ENCODE measurements at regions of chr7 and their contacts with region 1.

Region 1: DNA sequence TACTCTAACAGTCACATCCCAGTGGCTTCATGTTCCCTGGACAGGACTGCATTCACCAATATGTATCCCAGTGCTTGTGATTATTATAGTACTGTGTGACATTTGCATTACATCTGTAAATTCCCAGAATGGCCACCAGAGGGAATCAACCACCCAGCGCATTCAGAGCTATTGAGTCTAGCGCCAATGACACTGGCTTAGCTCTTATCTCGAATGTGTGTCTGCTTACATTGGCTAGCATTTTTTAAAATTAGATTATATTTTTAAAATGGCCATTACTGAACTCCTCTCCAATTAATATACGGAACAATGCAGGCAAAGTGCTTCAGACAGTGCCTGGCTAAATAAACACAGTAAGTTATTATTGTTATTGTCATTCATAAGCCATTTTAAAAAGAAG is 36.3 kb downstream of the TRIL start:
- DNase-seq: peak; percentile 44
- H3K4me3 ChIP-seq: no peak overlapping the region
- H3K27ac ChIP-seq: no peak overlapping the region
- H3K4me1 ChIP-seq: peaks cover 4% of the 10 kb centered on the region
- H3K27me3 ChIP-seq: no peaks in the 10 kb centered on the region
- CTCF ChIP-seq: peak; percentile 82 to 90

Region 2: DNA sequence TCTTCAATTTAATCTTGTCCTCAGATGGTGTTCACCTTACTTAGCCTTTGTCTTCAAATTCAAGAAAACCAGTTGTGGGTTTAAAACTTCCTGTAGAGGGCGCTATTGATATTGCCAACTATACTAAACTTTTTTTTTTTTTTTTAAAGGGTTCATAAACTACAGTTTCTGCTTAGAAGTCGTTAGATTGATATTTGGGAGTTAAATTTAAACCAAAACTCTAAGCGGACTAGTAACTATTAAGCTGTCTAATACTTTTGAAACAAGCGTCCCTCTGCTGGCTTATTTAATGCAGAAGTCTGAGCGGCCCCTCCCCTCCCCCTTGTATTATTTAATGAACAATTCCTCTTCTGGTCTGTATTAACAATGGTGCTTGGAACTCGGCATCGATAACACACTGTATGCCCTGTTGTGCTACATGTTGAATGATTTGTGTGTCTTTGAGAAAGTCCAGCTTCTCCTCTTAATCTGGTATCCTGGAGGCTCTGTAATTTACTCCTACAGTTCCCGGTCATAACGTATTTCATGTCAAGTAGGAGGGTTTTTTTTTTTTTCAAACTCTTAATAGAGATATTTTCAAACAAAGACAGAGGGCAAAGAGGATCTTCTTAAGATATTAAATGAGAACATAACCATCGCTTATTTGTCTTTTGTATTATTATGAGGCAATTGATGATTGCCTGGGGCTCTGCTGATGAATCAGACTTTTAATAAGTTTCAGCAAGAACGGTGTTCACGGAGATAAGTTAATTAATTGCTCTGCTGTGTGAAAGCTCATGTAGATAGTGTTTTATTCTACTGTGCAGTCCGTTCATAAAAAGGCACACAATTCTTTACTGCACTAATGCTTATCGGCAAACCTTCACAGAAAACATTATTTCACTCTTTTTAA is 532.1 kb before region 1 on chr7:
- CTCF ChIA-PET with region 1: no interaction called
- dilution Hi-C with region 1: no loop called
- in situ Hi-C with region 1: no loop called
- intact Hi-C with region 1: loop called (anchors 5 kb)
- DNase-seq: peak; percentile 58
- H3K4me3 ChIP-seq: peak overlapping the region; percentile 26 to 58 (median 30)
- H3K27ac ChIP-seq: no peak overlapping the region
- H3K4me1 ChIP-seq: peaks cover 9% of the 10 kb centered on the region
- H3K27me3 ChIP-seq: no peaks in the 10 kb centered on the region
- CTCF ChIP-seq: peak; percentile 58 to 65

Region 3: DNA sequence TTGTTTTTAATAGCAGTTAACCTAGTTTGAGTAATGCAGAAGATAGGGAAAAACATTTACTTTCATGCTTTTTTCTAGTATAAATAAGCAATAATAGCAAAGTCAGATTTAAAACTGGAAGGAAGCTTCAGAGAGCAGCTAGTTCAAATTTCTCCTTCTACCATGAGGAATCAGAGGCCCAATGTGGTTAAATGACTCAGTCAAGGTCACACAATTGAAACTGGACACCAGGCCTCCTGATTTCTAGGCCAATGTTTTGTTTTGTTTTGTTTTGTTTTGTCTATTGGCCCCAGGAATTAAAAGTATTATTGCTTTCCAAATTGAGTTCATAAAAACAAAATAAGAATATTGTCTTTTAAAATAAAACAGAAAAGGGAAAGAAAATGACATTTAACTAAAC is 86.0 kb before region 1 on chr7:
- CTCF ChIA-PET with region 1: no interaction called
- dilution Hi-C with region 1: no loop called
- in situ Hi-C with region 1: no loop called
- intact Hi-C with region 1: no loop called
- DNase-seq: peak; percentile 44
- H3K4me3 ChIP-seq: no peak overlapping the region
- H3K27ac ChIP-seq: no peak overlapping the region
- H3K4me1 ChIP-seq: no peaks in the 10 kb centered on the region
- H3K27me3 ChIP-seq: no peaks in the 10 kb centered on the region
- CTCF ChIP-seq: no peak

Region 4: GRCh38 chr7:29105752-29106668 is 184.2 kb after region 1 on chr7:
- CTCF ChIA-PET with region 1: interaction called, 23 read pairs
- dilution Hi-C with region 1: loop called (anchors 5 kb)
- in situ Hi-C with region 1: loop called (anchors 5 kb)
- intact Hi-C with region 1: loop called (anchors 1 kb)
- DNase-seq: peak; percentile 54
- H3K4me3 ChIP-seq: no peak overlapping the region
- H3K27ac ChIP-seq: no peak overlapping the region
- H3K4me1 ChIP-seq: peaks cover 21% of the 10 kb centered on the region
- H3K27me3 ChIP-seq: no peaks in the 10 kb centered on the region
- CTCF ChIP-seq: peak; percentile 89 to 93

Region 5: DNA sequence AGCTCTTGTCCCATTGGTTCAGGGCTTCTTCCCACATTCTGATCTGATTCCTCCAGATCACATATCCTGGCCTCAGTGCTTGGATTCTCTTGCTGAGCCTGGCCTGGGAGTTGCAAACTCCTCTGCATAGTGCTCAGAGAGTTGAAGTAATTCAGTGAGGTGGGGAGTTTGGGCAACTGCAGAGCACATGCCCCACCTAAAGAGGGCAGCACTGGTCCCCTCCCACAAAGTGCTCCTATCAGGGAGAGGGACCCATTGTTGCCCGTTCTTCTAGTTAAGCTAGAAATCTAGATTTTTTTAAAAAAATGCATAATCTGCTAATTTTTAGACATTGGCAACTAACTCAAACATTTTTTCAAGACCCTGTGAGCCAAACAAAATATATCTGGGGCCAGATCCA is 317.8 kb after region 1 on chr7:
- CTCF ChIA-PET with region 1: no interaction called
- dilution Hi-C with region 1: no loop called
- in situ Hi-C with region 1: no loop called
- intact Hi-C with region 1: loop called (anchors 1 kb)
- DNase-seq: no peak
- H3K4me3 ChIP-seq: no peak overlapping the region
- H3K27ac ChIP-seq: no peak overlapping the region
- H3K4me1 ChIP-seq: no peaks in the 10 kb centered on the region
- H3K27me3 ChIP-seq: no peaks in the 10 kb centered on the region
- CTCF ChIP-seq: peak; percentile 79 to 87

Region 6: GRCh38 chr7:29401769-29402168 is 479.9 kb after region 1 on chr7:
- CTCF ChIA-PET with region 1: no interaction called
- dilution Hi-C with region 1: no loop called
- in situ Hi-C with region 1: loop called (anchors 5 kb)
- intact Hi-C with region 1: no loop called
- DNase-seq: no peak
- H3K4me3 ChIP-seq: no peak overlapping the region
- H3K27ac ChIP-seq: no peak overlapping the region
- H3K4me1 ChIP-seq: no peaks in the 10 kb centered on the region
- H3K27me3 ChIP-seq: no peaks in the 10 kb centered on the region
- CTCF ChIP-seq: no peak

Measured in mammary epithelial cell (primary cell).